HEK293 (cell line): ENCODE measurements at regions of chr16 and their contacts with region 1.

Region 1: GRCh38 chr16:90081606-90081970 is 4.5 kb upstream of the PRDM7 start:
- H3K4me3 ChIP-seq: no peak overlapping the region
- H3K27ac ChIP-seq: no peak overlapping the region
- H3K4me1 ChIP-seq: no peaks in the 10 kb centered on the region
- CTCF ChIP-seq: no peak

Region 2: DNA sequence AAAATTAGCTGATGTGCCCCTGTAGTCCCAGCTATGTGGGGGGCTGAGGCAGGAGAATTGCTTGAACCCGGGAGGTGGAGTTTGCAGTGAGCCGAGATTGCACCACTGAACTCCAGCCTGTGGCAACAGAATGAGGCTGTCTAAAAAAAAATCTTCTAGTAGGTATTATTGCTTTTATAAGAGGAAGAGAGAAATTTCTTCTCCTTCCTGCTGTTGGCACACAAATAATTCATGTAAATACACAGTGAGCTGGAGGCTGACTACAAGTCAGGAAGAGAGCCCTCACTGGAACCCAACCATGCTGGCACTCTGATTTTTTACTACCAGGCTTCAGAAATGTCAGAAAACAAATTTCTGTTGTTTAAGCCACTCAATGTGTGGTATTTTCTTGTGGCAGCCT is 11.1 kb before region 1 on chr16:
- CTCF ChIA-PET with region 1: interaction called, 11 read pairs
- POLR2A ChIA-PET with region 1: interaction called, 3 read pairs
- H3K4me3 ChIP-seq: no peak overlapping the region
- H3K27ac ChIP-seq: no peak overlapping the region
- H3K4me1 ChIP-seq: no peaks in the 10 kb centered on the region
- CTCF ChIP-seq: no peak